ENCODE measurements at regions of chr12 and their contacts with region 1.

Region 1: GRCh38 chr12:6039894-6040568 is 84.4 kb downstream of the VWF start:
- DNase-seq: peak; percentile 69
- H3K4me3 Mint-ChIP-seq: no peak overlapping the region
- H3K27ac Mint-ChIP-seq: no peak overlapping the region
- H3K4me1 Mint-ChIP-seq: peaks cover 2% of the 10 kb centered on the region
- H3K27me3 Mint-ChIP-seq: no peaks in the 10 kb centered on the region

Region 2: DNA sequence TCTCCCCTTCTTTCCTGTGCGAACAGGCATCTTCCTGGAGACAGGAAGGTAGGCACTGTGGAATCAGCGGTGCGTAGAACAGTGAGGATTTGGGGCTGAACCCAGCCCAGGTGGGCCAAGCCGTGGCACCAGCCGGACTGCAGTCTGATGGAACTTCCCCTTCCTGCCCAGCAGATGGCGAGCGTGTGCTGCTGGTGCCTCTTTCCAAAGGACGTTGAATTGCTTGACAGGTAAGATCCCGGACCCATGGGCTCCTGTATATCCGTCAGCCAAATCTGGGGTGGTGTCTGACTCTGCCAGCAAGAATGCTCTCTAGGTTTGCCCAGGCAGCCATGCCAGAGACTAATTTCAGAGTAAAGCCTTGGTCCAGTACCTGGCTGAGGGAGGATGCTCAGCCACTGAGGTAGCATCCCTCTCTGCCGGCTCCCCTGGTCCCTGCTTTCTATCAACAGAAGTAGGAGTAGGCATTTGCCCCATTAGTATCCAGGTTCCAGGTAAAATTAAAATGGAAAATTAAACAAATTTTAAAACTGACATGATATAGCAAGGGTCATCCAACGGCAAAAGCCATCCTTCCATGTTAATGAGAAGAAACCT is 1017.5 kb before region 1 on chr12:
- CTCF ChIA-PET with region 1: no interaction called
- intact Hi-C with region 1: loop called (anchors 5 kb)
- DNase-seq: peak; percentile 54
- H3K4me3 Mint-ChIP-seq: no peak overlapping the region
- H3K27ac Mint-ChIP-seq: no peak overlapping the region
- H3K4me1 Mint-ChIP-seq: no peaks in the 10 kb centered on the region
- H3K27me3 Mint-ChIP-seq: peaks cover 16% of the 10 kb centered on the region

Region 3: GRCh38 chr12:5965950-5966383 is 74.1 kb before region 1 on chr12:
- CTCF ChIA-PET with region 1: interaction called, 8 read pairs
- intact Hi-C with region 1: loop called (anchors 1 kb)
- DNase-seq: peak; percentile 65
- H3K4me3 Mint-ChIP-seq: no peak overlapping the region
- H3K27ac Mint-ChIP-seq: no peak overlapping the region
- H3K4me1 Mint-ChIP-seq: no peaks in the 10 kb centered on the region
- H3K27me3 Mint-ChIP-seq: no peaks in the 10 kb centered on the region